ENCODE measurements at regions of chr12 and their contacts with region 1.

Region 1: DNA sequence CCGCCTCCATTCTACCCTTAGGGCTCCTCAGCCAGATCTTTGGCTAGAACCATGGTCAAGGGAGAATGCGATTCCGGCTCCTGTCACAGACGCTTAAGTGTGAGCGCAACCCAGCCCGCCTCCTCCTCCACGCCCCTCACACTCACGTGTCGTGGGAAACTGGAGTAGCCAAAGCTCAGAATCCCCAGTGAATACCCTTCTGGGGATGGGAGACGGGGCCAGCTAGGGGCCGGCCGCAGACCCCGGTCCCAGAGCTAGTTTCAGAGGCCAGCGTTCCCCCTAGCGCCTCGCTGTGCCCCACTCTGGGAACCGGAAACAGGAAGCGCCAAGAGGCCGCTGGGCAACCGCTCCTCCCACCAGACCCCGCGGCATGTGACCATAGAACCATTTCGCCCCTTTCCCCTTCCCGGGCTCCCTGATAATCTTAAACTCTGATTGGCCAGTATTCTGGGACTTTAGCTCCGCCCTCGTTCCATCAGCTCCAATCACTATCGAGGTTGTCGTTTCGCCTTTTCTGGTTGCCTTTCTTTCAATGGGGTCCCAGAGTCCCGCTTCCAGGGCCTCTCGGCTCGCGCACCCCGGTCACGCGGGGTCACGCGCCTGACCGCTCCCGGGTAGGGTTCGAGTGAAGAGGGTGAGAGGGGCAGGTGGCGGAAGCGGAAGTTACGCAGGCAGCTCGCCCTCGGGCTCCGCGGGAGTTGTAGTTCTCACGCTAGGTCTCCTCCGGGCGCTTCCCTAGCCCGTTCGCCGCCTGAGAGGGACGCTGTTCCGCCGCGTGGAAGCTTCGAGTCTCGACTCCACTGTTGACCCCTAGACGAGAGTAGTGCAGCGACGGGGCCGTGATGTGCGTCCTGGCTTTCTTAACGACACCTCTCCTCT is at the start of gene M6PR:
- DNase-seq: peak; percentile 93
- CTCF ChIP-seq: peak; percentile 88

Region 2: DNA sequence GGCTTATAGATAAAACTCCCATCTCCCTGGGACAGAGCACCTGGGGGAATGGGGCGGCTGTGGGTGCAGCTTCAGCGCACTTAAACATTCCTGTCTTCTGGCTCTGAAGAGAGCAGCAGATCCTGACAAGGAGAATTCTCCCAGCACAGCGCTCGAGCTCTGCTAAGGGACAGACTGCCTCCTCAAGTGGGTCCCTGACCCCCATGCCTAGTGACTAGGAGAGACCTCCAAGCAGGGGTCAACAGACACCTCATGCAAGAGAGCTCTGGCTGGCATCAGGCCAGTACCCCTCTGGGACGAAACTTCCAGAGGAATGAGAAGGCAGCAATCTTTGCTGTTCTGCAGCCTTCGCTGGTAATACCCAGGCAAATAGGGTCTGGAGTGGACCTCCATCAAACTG is 1477.5 kb before region 1 on chr12:
- in situ Hi-C with region 1: no loop called
- DNase-seq: no peak
- CTCF ChIP-seq: no peak

Region 3: GRCh38 chr12:9041321-9041720 is 91.7 kb after region 1 on chr12:
- in situ Hi-C with region 1: loop called (anchors 5 kb)
- DNase-seq: no peak
- CTCF ChIP-seq: no peak

Region 4: GRCh38 chr12:9319044-9319841 is 369.7 kb after region 1 on chr12:
- in situ Hi-C with region 1: no loop called
- DNase-seq: peak; percentile 40
- CTCF ChIP-seq: no peak